Lower lobe of right lung (tissue), 2 donors: ENCODE measurements at regions of chr4 and their contacts with region 1.

Region 1: DNA sequence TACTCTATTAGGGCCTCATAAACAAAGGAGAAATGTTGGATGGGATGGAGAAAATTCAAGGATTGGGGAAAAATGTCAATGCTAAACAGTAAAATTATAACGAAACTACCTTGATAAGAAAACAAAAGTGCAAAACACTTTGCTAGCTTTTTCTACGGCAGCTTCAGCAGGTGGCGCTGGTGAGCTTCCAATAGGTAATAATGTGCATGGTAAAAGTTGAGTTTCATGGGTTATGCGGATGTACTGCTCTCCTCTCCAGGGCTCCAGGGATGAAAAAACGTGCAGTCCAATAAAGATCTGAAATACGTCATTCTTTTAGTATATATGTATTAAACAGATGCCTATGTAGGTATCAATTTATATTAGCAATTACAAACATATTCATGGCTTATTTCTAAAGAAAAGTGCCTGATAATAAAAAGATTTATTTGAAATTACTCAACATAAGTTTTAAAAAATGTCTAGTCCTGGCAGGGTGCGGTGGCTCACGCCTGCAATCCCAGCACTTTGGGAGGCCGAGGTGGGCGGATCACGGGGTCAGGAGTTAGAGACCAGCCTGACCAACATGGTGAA is 239.6 kb downstream of the GRXCR1 start:
- DNase-seq: peak; percentile 48
- ATAC-seq: peak in 1 of 2 donors; percentile 54
- H3K4me3 ChIP-seq: no peak overlapping the region
- H3K27ac ChIP-seq: no peak overlapping the region
- H3K4me1 ChIP-seq: no peaks in the 10 kb centered on the region
- H3K27me3 ChIP-seq: no peaks in the 10 kb centered on the region
- CTCF ChIP-seq: peak; percentile 60

Region 2: DNA sequence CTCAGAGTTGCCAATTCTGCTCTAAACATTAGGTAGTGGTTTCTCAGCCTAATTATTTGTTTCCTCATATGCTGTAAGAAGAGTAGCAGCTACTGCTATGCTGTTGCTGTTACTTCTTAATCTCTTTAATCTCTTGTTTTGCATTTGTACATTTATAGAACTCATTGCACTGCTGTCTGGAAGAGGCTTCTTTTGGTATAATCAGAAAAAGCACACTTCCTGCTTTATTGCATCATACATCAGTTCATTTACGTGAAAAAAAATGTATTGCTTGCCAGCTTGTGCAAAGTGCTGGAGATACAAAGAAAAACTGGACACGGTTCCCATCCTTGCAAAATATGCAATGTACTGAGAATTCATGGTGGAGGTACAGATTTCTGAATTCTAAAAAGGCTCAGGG is 92.5 kb after region 1 on chr4:
- intact Hi-C with region 1: no loop called
- DNase-seq: no peak
- ATAC-seq: no peak
- H3K4me3 ChIP-seq: no peak overlapping the region
- H3K27ac ChIP-seq: no peak overlapping the region
- H3K4me1 ChIP-seq: no peaks in the 10 kb centered on the region
- H3K27me3 ChIP-seq: no peaks in the 10 kb centered on the region
- CTCF ChIP-seq: no peak

Region 3: GRCh38 chr4:43277003-43277402 is 144.9 kb after region 1 on chr4:
- intact Hi-C with region 1: no loop called
- DNase-seq: no peak
- ATAC-seq: no peak
- H3K4me3 ChIP-seq: no peak overlapping the region
- H3K27ac ChIP-seq: no peak overlapping the region
- H3K4me1 ChIP-seq: no peaks in the 10 kb centered on the region
- H3K27me3 ChIP-seq: no peaks in the 10 kb centered on the region
- CTCF ChIP-seq: no peak

Region 4: DNA sequence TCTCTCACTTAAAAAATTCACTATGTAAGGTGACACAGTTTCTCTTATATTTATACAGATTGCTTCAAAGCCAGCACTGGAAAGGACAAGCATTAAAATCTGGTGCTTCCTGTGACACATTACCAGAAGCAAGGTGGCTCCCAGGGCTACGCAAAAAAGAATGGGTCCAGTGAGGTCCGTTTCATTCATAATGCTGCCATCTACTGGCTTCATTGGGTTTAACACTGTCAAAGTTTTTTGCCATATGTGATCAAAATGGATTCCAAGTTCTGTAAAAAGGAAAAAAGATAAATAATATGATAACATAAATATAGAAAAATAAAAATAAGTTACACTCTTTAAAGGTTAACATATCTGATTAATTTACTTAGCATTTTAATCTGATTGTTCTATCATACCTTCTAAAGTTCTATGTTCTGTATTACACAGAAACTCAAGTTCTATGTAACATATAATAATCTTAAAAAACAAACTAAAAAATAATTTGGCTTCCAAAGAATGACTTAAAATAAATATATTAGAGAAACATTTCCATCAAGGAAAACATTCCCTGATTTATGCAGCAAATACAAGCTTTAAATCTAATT is 1497.3 kb after region 1 on chr4:
- intact Hi-C with region 1: loop called (anchors 10 kb)
- DNase-seq: no peak
- ATAC-seq: peak; percentile 70 to 75
- H3K4me3 ChIP-seq: no peak overlapping the region
- H3K27ac ChIP-seq: no peak overlapping the region
- H3K4me1 ChIP-seq: no peaks in the 10 kb centered on the region
- H3K27me3 ChIP-seq: no peaks in the 10 kb centered on the region
- CTCF ChIP-seq: peak; percentile 67